CD8-positive, alpha-beta memory T cell (primary cell): ENCODE measurements at regions of chr17 and their contacts with region 1.

Region 1: GRCh38 chr17:76384222-76384986 is at the start of gene SPHK1:
- DNase-seq: peak; percentile 37 to 63 (median 48)
- H3K4me3 ChIP-seq: peak within 1 kb of the TSS; percentile 59
- H3K4me3 Mint-ChIP-seq: peak within 1 kb of the TSS; percentile 81 to 96 (median 90)
- H3K27ac ChIP-seq: peak within 1 kb of the TSS; percentile 45
- H3K27ac Mint-ChIP-seq: peak within 1 kb of the TSS; percentile 44 to 91 (median 70)
- H3K4me1 ChIP-seq: peaks cover 19% of the 10 kb centered on the region
- H3K4me1 Mint-ChIP-seq: peaks cover 3 to 22% (median 6%) of the 10 kb centered on the region in 3 donors
- H3K27me3 ChIP-seq: no peaks in the 10 kb centered on the region
- H3K27me3 Mint-ChIP-seq: no peaks in the 10 kb centered on the region
- total RNA-seq, gene SPHK1: 17.2 to 18.7 TPM

Region 2: DNA sequence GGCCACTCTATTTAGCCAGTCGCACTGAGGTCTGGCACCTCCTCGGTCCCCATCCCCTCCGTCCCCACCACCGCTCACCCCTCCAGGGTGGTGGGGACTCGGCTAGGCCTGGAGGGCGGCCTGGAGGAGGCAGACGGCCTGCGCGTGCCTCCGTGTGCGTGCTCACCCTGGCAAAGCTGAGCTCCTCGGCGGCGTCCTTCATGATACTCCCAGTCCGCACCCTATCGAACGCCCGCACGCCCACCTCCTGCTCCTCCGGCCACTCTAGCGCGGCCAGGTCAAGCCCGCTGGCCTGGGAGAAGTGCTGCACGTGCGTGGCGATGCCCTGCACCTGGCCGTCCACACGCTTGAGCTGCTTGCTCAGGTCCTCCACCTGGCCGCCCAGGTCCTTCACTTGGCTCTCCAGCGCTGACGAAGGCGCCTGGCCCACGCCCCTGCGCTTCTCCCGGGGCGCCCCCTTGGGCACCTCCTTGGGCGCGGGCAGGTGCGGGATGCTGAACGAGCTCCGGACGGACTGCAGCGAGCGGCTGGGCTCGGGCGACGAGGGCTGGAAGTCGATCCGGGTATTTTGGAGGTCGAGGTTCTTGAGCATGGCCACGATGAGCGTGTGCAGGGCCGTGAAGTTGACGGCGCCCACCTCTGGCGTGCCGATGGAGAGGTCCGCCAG is 77.0 kb before region 1 on chr17:
- CTCF ChIA-PET with region 1: interaction called, 13 read pairs
- POLR2A ChIA-PET with region 1: interaction called, 4 read pairs
- DNase-seq: no peak
- H3K4me3 ChIP-seq: no peak overlapping the region
- H3K4me3 Mint-ChIP-seq: no peak overlapping the region
- H3K27ac ChIP-seq: no peak overlapping the region
- H3K27ac Mint-ChIP-seq: no peak overlapping the region
- H3K4me1 ChIP-seq: no peaks in the 10 kb centered on the region
- H3K4me1 Mint-ChIP-seq: peaks cover 0 to 4% (median 2%) of the 10 kb centered on the region in 3 donors
- H3K27me3 ChIP-seq: no peaks in the 10 kb centered on the region
- H3K27me3 Mint-ChIP-seq: peaks cover 0 to 1% of the 10 kb centered on the region in 2 donors

Region 3: GRCh38 chr17:76353599-76354316 is 30.6 kb before region 1 on chr17 and contains the start of gene PRPSAP1:
- CTCF ChIA-PET with region 1: interaction called, 46 read pairs
- POLR2A ChIA-PET with region 1: interaction called, 27 read pairs
- DNase-seq: peak; percentile 59 to 86 (median 82)
- H3K4me3 ChIP-seq: peak within 1 kb of the TSS; percentile 87
- H3K4me3 Mint-ChIP-seq: peak within 1 kb of the TSS; percentile 90 to 100 (median 96)
- H3K27ac ChIP-seq: peak within 1 kb of the TSS; percentile 77
- H3K27ac Mint-ChIP-seq: peak within 1 kb of the TSS; percentile 77 to 100 (median 98)
- H3K4me1 ChIP-seq: peaks cover 9% of the 10 kb centered on the region
- H3K4me1 Mint-ChIP-seq: peaks cover 18 to 29% (median 24%) of the 10 kb centered on the region in 3 donors
- H3K27me3 ChIP-seq: no peaks in the 10 kb centered on the region
- H3K27me3 Mint-ChIP-seq: peaks cover 0 to 4% of the 10 kb centered on the region in 2 donors
- total RNA-seq, gene PRPSAP1: 46.9 to 48.3 TPM

Region 4: DNA sequence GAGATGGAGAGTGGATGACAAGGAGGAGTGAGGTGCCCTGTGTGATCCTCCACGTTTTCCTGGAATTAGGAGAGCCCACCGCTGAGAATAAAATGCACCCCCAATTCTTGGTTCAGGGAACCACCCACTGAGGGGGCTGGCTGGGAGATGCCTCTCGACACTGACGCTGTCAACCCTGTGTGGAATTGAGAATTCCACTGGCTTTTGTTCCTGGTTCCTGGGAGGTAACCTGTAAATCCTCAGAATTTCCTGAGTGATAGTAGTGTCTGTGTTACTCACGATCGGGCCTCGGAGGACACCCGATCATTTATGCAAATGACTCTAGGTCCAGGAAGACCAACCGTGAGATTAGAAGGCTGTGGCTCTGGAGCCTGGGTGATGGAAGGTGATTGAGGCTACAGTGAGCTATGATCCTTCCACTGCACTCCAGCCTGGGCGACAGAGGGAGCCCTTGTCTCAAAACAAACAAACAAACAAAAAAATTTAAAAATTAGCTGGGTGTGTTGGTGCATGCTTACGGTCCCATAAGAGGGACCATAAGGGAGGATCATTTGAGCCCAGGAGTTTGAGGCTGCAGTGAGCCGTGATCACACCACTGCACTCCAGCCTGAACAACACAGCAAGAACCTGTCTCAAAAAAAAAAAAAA is 19.0 kb before region 1 on chr17:
- CTCF ChIA-PET with region 1: interaction called, 13 read pairs
- POLR2A ChIA-PET with region 1: no interaction called
- DNase-seq: no peak
- H3K4me3 ChIP-seq: no peak overlapping the region
- H3K4me3 Mint-ChIP-seq: no peak overlapping the region
- H3K27ac ChIP-seq: no peak overlapping the region
- H3K27ac Mint-ChIP-seq: no peak overlapping the region
- H3K4me1 ChIP-seq: no peaks in the 10 kb centered on the region
- H3K4me1 Mint-ChIP-seq: no peaks in the 10 kb centered on the region
- H3K27me3 ChIP-seq: no peaks in the 10 kb centered on the region
- H3K27me3 Mint-ChIP-seq: peaks cover 0 to 3% of the 10 kb centered on the region in 2 donors

Region 5: GRCh38 chr17:76370261-76370993 is 14.0 kb before region 1 on chr17:
- CTCF ChIA-PET with region 1: interaction called, 13 read pairs
- POLR2A ChIA-PET with region 1: interaction called, 21 read pairs
- DNase-seq: no peak
- H3K4me3 ChIP-seq: no peak overlapping the region
- H3K4me3 Mint-ChIP-seq: no peak overlapping the region
- H3K27ac ChIP-seq: no peak overlapping the region
- H3K27ac Mint-ChIP-seq: no peak overlapping the region
- H3K4me1 ChIP-seq: no peaks in the 10 kb centered on the region
- H3K4me1 Mint-ChIP-seq: no peaks in the 10 kb centered on the region
- H3K27me3 ChIP-seq: no peaks in the 10 kb centered on the region
- H3K27me3 Mint-ChIP-seq: no peaks in the 10 kb centered on the region

Region 6: DNA sequence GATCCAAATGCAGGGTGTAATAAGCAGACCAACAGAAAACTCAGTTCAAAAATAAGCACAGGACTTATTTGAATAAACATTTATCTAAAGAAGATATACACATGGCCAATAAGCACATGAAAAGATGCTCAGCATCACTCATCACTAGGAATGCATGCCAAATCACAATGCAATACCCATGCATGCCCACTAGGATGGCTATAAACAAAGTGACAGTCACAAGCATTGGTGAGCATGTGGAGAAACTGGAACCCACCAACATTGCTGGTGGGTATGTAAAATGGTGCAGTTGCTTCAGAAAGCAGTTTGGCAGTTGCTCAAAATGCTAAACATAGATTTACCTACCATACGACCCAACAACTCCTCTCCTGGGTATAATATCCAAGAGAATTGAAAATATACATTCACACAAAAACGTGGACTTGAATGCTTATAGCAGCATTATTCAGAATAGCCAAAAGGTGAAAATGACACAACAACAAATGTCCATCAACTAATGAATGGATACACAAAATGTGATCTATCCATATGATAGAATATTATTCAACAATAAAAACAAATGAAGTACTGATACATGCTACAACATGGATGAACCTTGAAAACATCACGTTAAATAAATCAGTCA is 48.4 kb after region 1 on chr17:
- CTCF ChIA-PET with region 1: no interaction called
- POLR2A ChIA-PET with region 1: no interaction called
- DNase-seq: no peak
- H3K4me3 ChIP-seq: no peak overlapping the region
- H3K4me3 Mint-ChIP-seq: no peak overlapping the region
- H3K27ac ChIP-seq: no peak overlapping the region
- H3K27ac Mint-ChIP-seq: no peak overlapping the region
- H3K4me1 ChIP-seq: no peaks in the 10 kb centered on the region
- H3K4me1 Mint-ChIP-seq: peaks cover 11 to 45% (median 30%) of the 10 kb centered on the region in 3 donors
- H3K27me3 ChIP-seq: no peaks in the 10 kb centered on the region
- H3K27me3 Mint-ChIP-seq: no peaks in the 10 kb centered on the region